Activated CD4-positive, alpha-beta T cell treated with anti-CD3 and anti-CD28 coated beads, Interleukin-2, amount 10 ng/mL, durations not matched to agents 24 days and 14 days (primary cell): ENCODE measurements at regions of chr1 and their contacts with region 1.

Region 1: DNA sequence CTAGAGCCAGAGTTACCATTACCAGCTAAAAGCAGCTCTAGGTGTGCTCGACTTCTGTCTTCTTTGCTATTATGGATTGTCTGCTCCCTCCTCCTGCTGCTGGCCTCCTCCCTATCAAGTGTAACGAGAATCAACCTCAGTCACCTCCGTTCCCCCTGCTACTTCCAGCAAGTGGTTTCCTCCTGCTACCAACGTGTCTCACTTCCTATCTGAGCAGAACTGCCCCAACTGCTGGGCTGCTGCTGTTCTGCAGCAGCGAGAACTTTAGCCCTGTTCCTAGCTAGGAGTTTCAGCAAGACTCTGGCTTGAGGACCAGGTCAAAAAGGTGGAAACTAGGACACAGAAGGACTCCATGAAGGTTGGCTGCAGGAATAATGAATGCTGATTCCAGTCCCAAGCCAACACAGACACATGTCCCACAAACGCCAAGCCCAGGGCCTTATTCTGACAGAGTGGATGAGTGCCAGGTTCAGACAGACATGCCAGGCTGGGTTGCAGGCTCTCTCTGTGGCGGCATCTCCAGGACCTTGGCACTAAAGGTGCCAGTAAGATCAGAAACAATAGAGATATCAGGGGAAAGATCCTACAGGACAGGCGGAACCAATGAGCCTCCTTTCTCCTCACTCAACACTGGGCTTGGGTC is 46.9 kb downstream of the CD34 start:
- DNase-seq: peak; percentile 87
- H3K4me3 Mint-ChIP-seq: peak overlapping the region; percentile 74
- H3K27ac Mint-ChIP-seq: peak overlapping the region; percentile 90
- H3K4me1 Mint-ChIP-seq: peaks cover 60% of the 10 kb centered on the region
- H3K27me3 Mint-ChIP-seq: no peaks in the 10 kb centered on the region

Region 2: GRCh38 chr1:207848234-207848633 is 15.8 kb before region 1 on chr1:
- intact Hi-C with region 1: loop called (anchors 1 kb)
- DNase-seq: peak; percentile 78
- H3K4me3 Mint-ChIP-seq: peak overlapping the region; percentile 57
- H3K27ac Mint-ChIP-seq: peak overlapping the region; percentile 51
- H3K4me1 Mint-ChIP-seq: peaks cover 53% of the 10 kb centered on the region
- H3K27me3 Mint-ChIP-seq: no peaks in the 10 kb centered on the region

Region 3: DNA sequence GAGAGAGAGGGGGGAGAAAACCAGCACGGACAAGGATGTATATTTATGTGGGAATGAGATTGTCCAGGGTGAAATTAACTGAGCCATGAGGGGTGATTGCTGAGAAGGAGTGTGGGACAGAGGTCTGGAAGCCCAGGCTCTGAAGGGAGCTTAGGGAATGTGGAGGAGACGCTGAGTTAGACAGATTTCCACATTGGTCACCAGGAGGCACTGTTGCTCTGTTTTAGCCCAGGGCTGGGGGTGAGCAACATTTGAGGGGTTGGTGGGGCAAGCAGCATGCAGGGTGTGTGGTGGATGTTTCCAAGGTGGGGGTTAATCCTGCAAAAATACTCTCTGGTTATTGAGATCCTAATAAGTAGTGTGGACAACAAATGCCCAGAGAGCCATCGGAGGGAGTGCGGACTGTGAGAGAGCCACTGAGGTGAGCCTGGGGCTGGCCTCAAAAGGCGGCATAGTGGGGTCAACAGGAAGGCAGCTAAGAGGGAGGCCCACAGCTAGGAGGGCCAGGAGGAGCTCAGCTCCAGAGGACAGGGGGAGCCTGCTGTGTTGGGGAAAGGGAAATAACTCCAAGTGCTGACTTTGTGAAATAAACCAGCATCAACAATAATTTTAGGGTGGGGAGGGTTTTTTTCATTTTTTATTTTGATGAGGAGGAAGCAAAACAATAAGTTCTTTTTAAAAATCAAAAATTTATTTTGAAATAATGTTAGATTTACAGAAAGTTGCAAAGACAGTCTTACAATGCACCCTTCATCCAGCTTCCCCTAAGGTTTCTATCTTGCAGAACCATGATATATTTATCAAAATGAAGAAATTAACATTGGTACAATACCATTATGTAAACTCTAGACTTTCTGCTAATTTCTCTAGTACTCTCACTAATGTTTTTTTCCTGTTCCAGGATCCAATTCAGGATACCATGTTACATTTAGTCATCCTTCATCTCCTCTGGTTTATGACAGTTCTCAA is 129.7 kb after region 1 on chr1:
- intact Hi-C with region 1: no loop called
- DNase-seq: no peak
- H3K4me3 Mint-ChIP-seq: no peak overlapping the region
- H3K27ac Mint-ChIP-seq: no peak overlapping the region
- H3K4me1 Mint-ChIP-seq: no peaks in the 10 kb centered on the region
- H3K27me3 Mint-ChIP-seq: peaks cover 26% of the 10 kb centered on the region